Stomach (tissue), 19 donors: ENCODE measurements at regions of chr7 and their contacts with region 1.

Region 1: GRCh38 chr7:80432166-80432565 is 79.7 kb downstream of the GNAT3 start:
- DNase-seq: no peak
- H3K4me3 ChIP-seq: no peak overlapping the region
- H3K27ac ChIP-seq: no peak overlapping the region
- H3K4me1 ChIP-seq: peaks cover 0 to 5% (median 0%) of the 10 kb centered on the region in 4 donors
- H3K27me3 ChIP-seq: no peaks in the 10 kb centered on the region
- CTCF ChIP-seq: no peak
- EP300 ChIP-seq: no peak
- POLR2A ChIP-seq: no peak

Region 2: GRCh38 chr7:80659120-80660055 is 227.2 kb after region 1 on chr7:
- intact Hi-C with region 1: loop called (anchors 5 kb)
- DNase-seq: peak in 1 of 2 donors; percentile 63
- H3K4me3 ChIP-seq: no peak overlapping the region
- H3K27ac ChIP-seq: no peak overlapping the region
- H3K4me1 ChIP-seq: peaks cover 0 to 4% (median 0%) of the 10 kb centered on the region in 4 donors
- H3K27me3 ChIP-seq: no peaks in the 10 kb centered on the region
- CTCF ChIP-seq: peak in 5 of 7 experiments; percentile 60 to 67 (median 63)
- EP300 ChIP-seq: no peak
- POLR2A ChIP-seq: no peak